ENCODE measurements at regions of chr14 and their contacts with region 1.

Region 1: DNA sequence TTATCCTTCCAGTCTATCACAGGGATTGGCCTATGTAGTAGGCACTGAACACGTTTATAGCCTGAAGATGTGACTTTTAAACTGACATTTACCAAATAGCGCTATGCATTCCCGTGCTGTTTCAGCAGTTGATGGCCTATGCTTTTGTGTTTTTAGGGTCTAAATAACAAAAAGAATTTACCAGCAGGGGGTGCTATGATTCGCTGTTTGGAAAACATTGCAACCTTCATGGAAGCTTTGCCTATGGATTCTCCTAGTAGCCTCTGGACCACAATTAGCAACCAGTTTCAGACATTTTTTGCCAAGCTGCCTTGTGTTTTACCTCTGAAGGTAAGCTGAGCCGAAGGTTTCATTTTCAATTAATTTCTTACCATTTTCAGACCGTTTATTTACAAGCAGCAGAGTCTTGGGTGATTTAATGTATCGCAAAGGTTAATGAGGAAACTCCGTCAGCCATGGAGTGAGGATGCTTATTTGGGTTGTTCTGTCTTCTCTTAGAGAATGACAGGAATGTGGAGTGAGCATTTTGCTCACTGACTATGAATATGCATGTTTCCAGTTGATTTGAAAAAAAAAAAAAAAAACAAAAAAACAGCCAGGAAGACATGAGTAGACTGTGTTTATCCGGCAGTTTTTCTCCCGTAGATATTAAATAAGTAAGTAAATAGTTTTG is 133.1 kb downstream of the PRIMA1 start:
- DNase-seq: peak; percentile 72
- H3K4me3 Mint-ChIP-seq: no peak overlapping the region
- H3K27ac Mint-ChIP-seq: no peak overlapping the region
- H3K4me1 Mint-ChIP-seq: no peaks in the 10 kb centered on the region
- H3K27me3 Mint-ChIP-seq: peaks cover 50% of the 10 kb centered on the region
- CTCF ChIP-seq: peak; percentile 63

Region 2: GRCh38 chr14:92144708-92145107 is 1510.5 kb before region 1 on chr14:
- CTCF ChIA-PET with region 1: interaction called, 11 read pairs
- POLR2A ChIA-PET with region 1: no interaction called
- intact Hi-C with region 1: no loop called
- DNase-seq: no peak
- H3K4me3 Mint-ChIP-seq: no peak overlapping the region
- H3K27ac Mint-ChIP-seq: peak overlapping the region; percentile 3
- H3K4me1 Mint-ChIP-seq: no peaks in the 10 kb centered on the region
- H3K27me3 Mint-ChIP-seq: no peaks in the 10 kb centered on the region
- CTCF ChIP-seq: no peak

Region 3: DNA sequence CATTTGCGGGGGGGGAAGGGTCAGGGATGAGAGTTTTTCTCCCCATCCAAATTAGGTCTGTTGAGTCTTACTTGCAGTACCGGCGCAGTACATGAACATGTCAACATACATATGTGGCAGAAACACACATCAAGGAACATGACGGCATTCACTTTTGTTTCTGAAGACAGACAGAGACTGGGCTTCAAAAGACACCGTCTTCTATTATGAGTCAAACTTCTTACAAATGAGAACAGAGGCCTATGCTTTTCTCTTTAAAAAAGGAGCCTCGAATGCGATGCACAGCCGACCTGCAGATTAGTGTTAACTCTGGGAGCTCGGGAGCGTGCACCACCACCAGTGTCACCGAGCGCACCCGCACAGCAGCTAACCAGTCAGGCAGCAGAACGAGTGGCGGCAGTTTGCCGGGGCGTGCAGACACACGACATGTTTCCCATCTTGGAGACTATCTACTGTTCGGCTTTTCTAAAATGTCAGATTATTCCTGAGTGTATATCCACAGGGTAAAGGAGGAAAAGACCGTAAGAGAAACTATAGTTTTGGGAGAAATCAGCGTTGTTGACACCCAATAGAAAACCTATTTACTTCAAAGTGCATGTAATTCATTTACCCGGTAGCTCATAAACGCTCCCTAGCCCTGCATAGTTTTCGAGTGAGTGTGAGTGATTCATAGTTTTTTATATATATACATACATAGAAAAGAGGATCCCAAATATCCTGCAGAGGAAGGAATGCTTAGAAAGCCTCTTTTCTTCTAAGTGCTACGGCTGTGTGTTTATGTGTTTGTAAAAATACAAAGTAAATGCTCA is 415.1 kb before region 1 on chr14:
- CTCF ChIA-PET with region 1: no interaction called
- POLR2A ChIA-PET with region 1: no interaction called
- intact Hi-C with region 1: no loop called
- DNase-seq: peak; percentile 60
- H3K4me3 Mint-ChIP-seq: no peak overlapping the region
- H3K27ac Mint-ChIP-seq: peak overlapping the region; percentile 54
- H3K4me1 Mint-ChIP-seq: peaks cover 4% of the 10 kb centered on the region
- H3K27me3 Mint-ChIP-seq: no peaks in the 10 kb centered on the region
- CTCF ChIP-seq: no peak

Region 4: DNA sequence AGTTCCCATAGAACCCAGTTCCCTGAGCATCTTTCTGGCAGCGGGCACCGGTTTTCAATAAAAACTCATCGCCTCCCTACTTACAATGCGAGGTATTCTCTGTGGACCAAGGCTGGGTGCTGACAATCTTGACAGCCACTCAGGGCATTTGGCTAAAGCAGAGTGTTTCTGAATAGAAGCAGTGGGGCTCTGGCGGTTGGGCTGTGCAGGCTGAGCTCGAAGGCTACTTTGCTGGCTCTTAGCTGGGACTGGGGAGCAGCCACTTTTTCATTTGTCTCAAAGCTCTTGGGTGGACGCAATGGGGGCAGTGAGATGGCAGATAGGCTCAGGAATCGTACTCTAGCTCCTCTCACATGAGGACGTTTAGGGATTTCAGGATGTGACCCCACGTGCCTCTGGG is 72.7 kb before region 1 on chr14:
- CTCF ChIA-PET with region 1: no interaction called
- POLR2A ChIA-PET with region 1: no interaction called
- intact Hi-C with region 1: no loop called
- DNase-seq: no peak
- H3K4me3 Mint-ChIP-seq: no peak overlapping the region
- H3K27ac Mint-ChIP-seq: no peak overlapping the region
- H3K4me1 Mint-ChIP-seq: no peaks in the 10 kb centered on the region
- H3K27me3 Mint-ChIP-seq: peaks cover 30% of the 10 kb centered on the region
- CTCF ChIP-seq: no peak

Region 5: GRCh38 chr14:93645200-93645599 is 10.0 kb before region 1 on chr14:
- CTCF ChIA-PET with region 1: interaction called, 19 read pairs
- POLR2A ChIA-PET with region 1: interaction called, 5 read pairs
- intact Hi-C with region 1: no loop called
- DNase-seq: no peak
- H3K4me3 Mint-ChIP-seq: no peak overlapping the region
- H3K27ac Mint-ChIP-seq: no peak overlapping the region
- H3K4me1 Mint-ChIP-seq: no peaks in the 10 kb centered on the region
- H3K27me3 Mint-ChIP-seq: peaks cover 67% of the 10 kb centered on the region
- CTCF ChIP-seq: no peak

Region 6: DNA sequence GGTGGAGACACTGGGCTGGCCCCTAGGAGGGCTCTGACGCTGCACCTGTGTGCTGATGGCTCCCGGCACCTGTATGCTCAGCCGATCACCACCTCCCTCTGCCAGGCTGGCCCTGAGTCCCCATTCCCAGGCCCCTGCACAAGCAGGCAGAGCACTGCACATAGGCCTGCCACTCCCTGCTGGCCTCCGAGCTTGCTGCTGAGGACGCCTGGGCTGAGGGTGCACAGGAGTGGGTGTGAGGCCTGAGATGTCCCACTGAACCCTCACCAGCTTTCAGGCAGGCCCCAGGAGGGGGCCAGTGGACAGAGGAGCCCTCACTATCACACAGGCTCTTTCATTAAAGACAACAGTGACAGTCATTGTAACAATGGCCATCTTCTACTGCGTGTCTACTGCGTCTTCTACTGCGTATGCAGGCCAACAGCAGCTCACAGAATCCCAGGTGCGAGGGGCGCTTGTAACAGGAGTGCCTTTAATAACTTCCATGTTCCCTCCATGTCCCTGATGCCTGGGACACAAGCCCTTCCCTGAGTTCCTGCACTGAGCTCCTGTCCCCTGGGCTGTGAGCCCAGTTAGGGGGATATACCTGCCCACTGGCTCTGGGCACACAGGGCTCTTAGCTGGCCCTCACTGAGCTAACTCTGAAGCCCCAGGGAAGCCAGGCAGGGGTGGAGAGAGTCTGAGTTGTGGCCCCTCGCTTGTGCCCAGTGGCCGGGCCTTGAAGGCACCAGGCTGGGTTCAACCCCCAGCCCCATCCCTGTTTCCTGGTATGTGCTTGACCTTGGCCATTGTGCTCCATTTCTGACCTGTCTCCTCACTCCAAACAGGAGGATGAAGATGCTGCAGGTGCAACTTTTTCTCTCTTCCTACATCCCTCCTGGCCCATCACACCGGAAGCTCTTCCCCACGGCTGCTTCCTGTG is 61.8 kb after region 1 on chr14:
- CTCF ChIA-PET with region 1: no interaction called
- POLR2A ChIA-PET with region 1: no interaction called
- intact Hi-C with region 1: no loop called
- DNase-seq: no peak
- H3K4me3 Mint-ChIP-seq: no peak overlapping the region
- H3K27ac Mint-ChIP-seq: no peak overlapping the region
- H3K4me1 Mint-ChIP-seq: peaks cover 12% of the 10 kb centered on the region
- H3K27me3 Mint-ChIP-seq: no peaks in the 10 kb centered on the region
- CTCF ChIP-seq: no peak

Region 7: DNA sequence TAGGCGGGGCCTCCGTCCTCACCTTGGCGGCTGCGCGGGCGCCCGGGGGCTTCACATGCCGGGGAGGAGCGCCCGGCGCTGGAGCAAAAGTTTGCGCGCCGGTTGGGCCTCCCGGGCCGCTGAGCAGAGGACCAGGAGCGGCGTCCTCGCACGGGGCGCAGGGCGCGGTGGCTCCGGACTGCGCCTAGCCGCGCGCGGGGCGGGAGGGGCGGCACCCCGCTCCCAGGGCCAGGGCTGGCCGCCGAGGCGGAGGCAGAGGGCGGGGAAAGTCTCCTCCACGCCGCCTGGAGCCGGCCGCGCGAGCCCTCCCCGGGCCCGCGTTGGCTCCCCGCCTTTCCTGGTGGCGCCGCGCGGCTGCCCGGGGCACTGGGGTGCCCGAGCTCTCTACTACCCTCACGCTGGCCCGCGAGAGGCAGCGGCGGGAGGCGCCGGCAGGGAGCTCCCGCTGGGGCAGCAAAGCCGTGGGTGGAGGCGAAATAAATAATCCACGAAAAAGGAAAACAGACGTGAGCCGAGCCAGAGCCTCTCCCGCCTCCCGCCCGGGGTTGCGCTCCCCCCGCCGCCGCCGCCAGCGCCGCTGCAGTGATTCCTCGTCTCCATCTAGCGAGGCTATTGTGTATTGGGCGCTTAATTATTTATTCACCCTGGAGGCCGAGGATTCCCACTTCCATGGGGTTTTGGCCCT is 133.5 kb after region 1 on chr14:
- CTCF ChIA-PET with region 1: interaction called, 38 read pairs
- POLR2A ChIA-PET with region 1: no interaction called
- intact Hi-C with region 1: loop called (anchors 1 kb)
- DNase-seq: peak; percentile 42
- H3K4me3 Mint-ChIP-seq: peak overlapping the region; percentile 56
- H3K27ac Mint-ChIP-seq: no peak overlapping the region
- H3K4me1 Mint-ChIP-seq: no peaks in the 10 kb centered on the region
- H3K27me3 Mint-ChIP-seq: no peaks in the 10 kb centered on the region
- CTCF ChIP-seq: peak; percentile 48

Region 8: DNA sequence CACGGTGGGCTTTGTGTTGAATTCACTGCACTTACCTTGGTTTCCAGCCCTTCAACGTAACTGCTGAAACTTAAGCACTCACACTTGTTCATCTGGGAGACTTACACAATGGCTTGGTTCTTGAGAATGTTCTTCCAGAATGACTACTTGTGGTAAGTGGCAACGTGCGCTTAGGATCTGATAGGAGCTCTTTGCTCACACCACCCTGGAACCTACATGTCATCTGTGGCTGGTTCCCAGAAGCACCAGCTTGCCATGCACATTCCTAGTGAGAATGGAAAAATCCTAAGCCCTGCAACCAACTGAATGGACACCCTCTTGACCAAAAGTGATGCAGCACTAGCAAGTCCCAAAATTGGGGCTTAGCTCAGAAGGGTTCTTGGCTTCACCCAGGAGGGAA is 213.0 kb after region 1 on chr14:
- CTCF ChIA-PET with region 1: interaction called, 11 read pairs
- POLR2A ChIA-PET with region 1: no interaction called
- intact Hi-C with region 1: no loop called
- DNase-seq: no peak
- H3K4me3 Mint-ChIP-seq: no peak overlapping the region
- H3K27ac Mint-ChIP-seq: no peak overlapping the region
- H3K4me1 Mint-ChIP-seq: no peaks in the 10 kb centered on the region
- H3K27me3 Mint-ChIP-seq: peaks cover 80% of the 10 kb centered on the region
- CTCF ChIP-seq: no peak

Region 9: DNA sequence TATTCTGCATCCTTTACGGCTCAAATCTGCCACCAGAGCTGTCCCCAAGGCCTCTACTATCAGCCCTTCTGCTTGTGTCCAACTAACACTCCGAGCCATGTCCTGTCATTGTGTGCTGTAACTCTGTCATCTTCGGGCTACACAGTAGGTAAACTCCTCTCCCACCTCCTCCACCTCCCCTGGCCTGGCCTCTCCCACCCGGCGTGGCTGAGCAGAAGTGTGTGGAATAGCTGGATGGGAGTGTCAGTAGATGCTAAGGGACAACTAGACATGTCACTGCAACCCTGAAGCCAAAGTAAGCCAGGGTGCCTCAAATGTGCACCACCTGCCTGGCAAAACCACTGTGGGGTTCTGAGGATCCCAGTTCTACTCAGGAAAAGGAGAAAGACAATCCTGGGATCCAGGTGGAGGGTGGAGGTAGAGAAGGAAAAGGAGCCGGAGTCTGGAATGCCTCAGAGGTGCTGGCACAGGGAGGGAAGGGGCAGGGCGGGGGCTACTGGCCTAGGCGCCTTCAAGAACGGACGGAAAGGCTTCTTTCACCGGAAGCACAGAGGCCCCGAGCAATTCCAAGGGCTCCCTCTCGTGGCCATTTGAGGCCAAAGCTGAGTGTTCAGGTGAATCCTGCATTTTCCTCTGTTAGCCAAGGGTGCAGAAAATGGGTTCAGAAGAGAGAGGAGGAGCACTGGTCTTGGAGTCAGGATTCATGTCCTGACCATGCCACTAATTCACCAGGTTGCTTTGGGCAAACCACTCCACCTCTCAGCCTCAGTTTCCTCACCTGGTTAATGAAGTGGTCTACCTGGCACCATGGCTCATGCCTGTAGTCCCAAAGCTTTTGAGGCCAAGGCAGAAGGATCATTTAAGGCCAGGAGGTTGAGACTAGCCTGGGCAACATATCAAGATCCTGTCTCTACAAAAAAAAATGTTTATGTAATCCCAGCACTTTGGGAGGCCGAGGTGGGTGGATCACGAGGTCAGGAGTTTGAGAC is 251.4 kb after region 1 on chr14:
- CTCF ChIA-PET with region 1: interaction called, 135 read pairs
- POLR2A ChIA-PET with region 1: no interaction called
- intact Hi-C with region 1: loop called (anchors 1 kb)
- DNase-seq: peak; percentile 83
- H3K4me3 Mint-ChIP-seq: no peak overlapping the region
- H3K27ac Mint-ChIP-seq: no peak overlapping the region
- H3K4me1 Mint-ChIP-seq: no peaks in the 10 kb centered on the region
- H3K27me3 Mint-ChIP-seq: peaks cover 54% of the 10 kb centered on the region
- CTCF ChIP-seq: peak; percentile 79

Region 10: GRCh38 chr14:94001501-94002396 is 346.5 kb after region 1 on chr14:
- CTCF ChIA-PET with region 1: interaction called, 29 read pairs
- POLR2A ChIA-PET with region 1: no interaction called
- intact Hi-C with region 1: loop called (anchors 2 kb)
- DNase-seq: peak; percentile 63
- H3K4me3 Mint-ChIP-seq: no peak overlapping the region
- H3K27ac Mint-ChIP-seq: no peak overlapping the region
- H3K4me1 Mint-ChIP-seq: peaks cover 5% of the 10 kb centered on the region
- H3K27me3 Mint-ChIP-seq: peaks cover 12% of the 10 kb centered on the region
- CTCF ChIP-seq: peak; percentile 88